ENCODE measurements at regions of chr17 and their contacts with region 1.

Region 1: DNA sequence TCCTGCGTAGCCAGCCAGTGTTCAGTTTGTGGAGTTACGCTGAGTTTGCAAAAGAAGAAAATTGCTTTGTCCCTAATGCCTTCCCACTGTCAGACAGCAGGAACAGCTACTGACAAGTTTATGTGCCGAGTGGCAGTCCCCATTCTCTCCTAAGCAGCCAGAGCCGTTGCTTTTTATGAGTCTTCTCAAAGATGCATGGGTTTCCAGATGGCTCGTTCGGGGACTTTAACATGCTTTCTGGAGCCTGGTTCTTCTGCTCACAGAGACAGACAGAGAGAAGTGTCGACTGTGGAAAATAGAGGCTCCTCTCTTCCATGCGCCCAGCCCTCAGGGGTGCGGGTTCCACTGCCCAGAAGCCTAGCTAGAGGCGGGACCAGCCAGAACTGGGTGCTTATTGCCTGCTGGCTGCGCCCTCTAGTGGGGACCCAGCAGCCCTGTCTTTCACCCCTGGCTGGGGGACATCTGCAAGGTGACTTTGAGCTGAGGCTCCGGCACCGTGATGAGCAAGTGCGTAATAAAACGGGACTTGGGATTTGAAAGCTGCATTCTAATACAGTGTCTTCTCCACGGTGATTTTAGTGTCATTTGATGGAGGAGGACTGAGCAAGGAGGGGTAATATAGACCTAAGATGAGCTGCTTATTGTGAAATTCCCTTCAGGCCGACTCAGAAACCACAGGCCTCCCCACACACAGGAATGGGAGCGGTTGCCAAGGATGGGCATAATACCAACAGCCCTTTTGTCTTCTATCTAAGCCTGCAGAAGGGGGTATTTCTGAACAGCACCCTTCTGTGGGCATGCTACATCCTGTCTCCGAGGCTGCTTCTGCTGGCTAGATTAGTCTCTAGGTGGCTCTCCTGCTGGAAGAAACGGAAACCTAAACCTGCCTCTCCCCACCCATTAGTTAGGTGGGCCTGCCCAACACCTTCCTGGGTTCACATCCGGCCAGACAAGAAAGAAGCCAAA is 73.1 kb downstream of the CCDC182 start:
- DNase-seq: peak; percentile 82 to 89
- ATAC-seq: peak; percentile 92
- H3K4me3 ChIP-seq: no peak overlapping the region
- H3K27ac ChIP-seq: no peak overlapping the region
- H3K4me1 ChIP-seq: no peaks in the 10 kb centered on the region
- H3K27me3 ChIP-seq: no peaks in the 10 kb centered on the region

Region 2: GRCh38 chr17:57130761-57131461 is 541.0 kb before region 1 on chr17:
- intact Hi-C with region 1: loop called (anchors 5 kb)
- DNase-seq: peak; percentile 85 to 91
- ATAC-seq: peak; percentile 89
- H3K4me3 ChIP-seq: no peak overlapping the region
- H3K27ac ChIP-seq: no peak overlapping the region
- H3K4me1 ChIP-seq: no peaks in the 10 kb centered on the region
- H3K27me3 ChIP-seq: no peaks in the 10 kb centered on the region

Region 3: DNA sequence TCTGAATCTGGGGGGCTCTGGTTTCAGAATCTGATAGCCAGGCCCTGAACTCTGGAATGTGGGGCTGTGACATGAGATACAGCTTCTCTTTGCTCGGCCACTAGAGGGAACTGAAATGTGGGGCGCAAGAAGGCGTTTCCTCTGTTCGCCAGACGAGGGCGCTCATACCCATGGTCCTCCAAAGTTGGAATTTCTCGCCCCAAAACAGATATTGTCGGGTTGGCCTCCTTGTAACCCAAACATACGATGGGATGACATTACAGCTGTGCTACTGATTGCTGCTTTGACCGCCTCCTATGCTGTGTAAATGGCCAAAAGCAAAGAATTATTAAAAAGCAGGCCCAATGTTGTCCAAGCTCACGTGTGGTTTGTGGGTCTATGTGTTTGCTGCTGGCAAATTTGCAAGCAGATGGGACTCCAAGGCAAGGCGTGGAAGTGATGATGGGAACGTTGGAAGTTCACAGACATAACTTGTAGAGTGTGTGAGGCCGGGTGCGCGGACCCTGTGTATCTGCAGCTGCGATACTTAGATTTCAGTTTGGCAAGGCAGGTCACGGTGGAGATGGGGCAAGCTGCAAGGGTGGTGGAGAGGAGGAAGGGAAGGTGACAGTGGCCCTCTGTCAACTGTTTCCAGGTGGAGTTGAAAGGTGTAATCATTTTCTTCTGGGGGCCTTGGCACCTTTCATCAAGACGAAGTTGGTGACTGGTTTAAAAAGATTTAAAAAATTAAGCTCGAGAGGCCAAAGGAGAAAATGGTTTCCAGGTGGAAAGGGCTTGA is 428.6 kb before region 1 on chr17:
- intact Hi-C with region 1: loop called (anchors 2 to 5 kb)
- DNase-seq: peak; percentile 65 to 87
- ATAC-seq: peak; percentile 91
- H3K4me3 ChIP-seq: no peak overlapping the region
- H3K27ac ChIP-seq: no peak overlapping the region
- H3K4me1 ChIP-seq: peaks cover 0 to 3% of the 10 kb centered on the region in 2 donors
- H3K27me3 ChIP-seq: no peaks in the 10 kb centered on the region

Region 4: DNA sequence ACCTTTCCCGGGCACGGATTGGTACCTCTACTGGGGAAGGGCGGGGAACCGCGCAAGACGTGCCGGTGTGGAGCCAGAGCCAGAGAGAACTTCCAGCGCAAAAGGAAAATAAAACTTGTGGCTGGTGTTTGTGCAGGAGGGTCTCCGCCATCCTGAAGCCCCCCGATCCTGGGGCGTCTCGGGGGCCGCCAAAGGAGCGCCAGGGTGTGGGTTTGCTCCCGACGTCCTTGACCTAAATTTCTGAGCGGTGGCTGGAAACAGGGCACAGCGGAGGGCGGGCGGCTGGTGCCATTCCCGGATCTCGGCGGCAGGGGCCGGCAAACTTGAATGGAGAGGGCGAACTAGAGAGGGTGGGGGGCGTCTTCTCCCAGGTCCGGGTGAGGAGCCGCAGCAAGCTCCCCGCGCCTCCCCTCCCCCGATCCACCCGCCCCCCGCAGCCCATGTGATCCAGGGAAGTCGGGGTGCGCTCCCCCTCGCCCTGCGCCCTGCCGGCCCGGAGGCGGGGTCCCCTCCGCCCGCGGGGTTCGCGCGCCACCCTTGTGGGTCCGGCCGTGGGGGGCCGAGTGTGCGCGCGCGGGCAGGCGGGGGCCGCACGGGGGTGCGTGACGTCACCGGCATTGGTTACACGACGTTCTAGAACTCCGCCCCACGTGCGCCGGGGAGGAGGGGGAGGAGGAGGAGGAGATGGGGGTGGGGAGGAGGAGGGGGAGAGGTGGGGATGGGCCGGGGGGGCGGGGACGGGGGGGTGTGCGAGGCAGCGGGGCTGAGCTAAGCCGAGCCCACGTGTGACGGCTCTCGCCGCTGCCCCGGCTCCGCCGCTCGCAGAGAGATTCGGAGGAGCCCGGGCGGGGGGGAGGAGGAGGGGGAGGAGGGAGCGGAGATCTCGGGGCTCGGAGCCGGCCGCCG is 415.9 kb before region 1 on chr17 and contains the start of gene MSI2:
- intact Hi-C with region 1: loop called in 1 of 2 experiments (anchors 5 kb)
- DNase-seq: peak; percentile 94 to 97
- ATAC-seq: peak; percentile 94
- H3K4me3 ChIP-seq: peak within 1 kb of the TSS; percentile 97
- H3K27ac ChIP-seq: peak within 1 kb of the TSS; percentile 69 to 92
- H3K4me1 ChIP-seq: peaks cover 2 to 4% of the 10 kb centered on the region in 2 donors
- H3K27me3 ChIP-seq: no peaks in the 10 kb centered on the region
- total RNA-seq, gene MSI2: 47.2 to 48.2 TPM

Region 5: DNA sequence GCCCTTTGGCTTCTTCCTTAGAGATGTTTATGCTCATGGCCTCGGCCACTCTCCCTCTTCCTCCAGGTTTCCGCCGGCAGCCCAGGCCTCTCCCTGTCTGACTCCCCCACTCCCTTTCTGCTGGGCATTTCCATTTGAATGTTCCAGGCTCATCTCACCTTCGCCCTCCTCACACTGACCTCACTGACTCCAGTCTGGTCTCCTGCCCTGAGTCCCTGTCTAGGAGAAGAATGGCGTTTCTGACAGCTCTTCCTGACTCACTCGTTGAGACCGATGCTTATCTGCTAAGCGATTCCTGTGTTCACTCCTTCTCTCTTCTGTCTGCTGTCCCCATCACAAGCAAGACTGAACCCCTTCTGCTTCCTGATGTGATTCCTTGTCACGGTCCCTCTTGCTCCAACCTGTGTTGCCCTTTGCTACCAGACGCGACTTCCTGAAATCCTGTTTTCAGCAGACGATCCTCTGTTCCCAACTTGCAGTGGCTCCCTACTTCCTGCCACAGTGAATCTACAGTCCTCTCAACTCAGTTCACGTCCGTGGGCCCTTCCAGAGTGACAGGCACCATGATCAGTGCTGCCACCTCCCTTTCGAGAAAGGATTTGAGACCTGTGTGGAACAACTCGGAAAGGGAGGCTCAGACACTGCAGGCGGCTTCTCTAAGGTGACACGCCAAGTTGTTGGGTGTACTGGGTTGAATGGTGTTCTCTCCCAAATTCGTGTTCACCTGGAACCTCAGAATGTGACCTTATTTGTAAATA is 239.3 kb before region 1 on chr17:
- intact Hi-C with region 1: loop called in 1 of 2 experiments (anchors 10 kb)
- DNase-seq: no peak
- ATAC-seq: no peak
- H3K4me3 ChIP-seq: no peak overlapping the region
- H3K27ac ChIP-seq: no peak overlapping the region
- H3K4me1 ChIP-seq: no peaks in the 10 kb centered on the region
- H3K27me3 ChIP-seq: no peaks in the 10 kb centered on the region

Region 6: GRCh38 chr17:57552114-57552624 is 119.8 kb before region 1 on chr17:
- intact Hi-C with region 1: loop called in 1 of 2 experiments (anchors 5 kb)
- DNase-seq: peak in 1 of 2 donors; percentile 85
- ATAC-seq: peak; percentile 69
- H3K4me3 ChIP-seq: no peak overlapping the region
- H3K27ac ChIP-seq: no peak overlapping the region
- H3K4me1 ChIP-seq: no peaks in the 10 kb centered on the region
- H3K27me3 ChIP-seq: no peaks in the 10 kb centered on the region

Region 7: DNA sequence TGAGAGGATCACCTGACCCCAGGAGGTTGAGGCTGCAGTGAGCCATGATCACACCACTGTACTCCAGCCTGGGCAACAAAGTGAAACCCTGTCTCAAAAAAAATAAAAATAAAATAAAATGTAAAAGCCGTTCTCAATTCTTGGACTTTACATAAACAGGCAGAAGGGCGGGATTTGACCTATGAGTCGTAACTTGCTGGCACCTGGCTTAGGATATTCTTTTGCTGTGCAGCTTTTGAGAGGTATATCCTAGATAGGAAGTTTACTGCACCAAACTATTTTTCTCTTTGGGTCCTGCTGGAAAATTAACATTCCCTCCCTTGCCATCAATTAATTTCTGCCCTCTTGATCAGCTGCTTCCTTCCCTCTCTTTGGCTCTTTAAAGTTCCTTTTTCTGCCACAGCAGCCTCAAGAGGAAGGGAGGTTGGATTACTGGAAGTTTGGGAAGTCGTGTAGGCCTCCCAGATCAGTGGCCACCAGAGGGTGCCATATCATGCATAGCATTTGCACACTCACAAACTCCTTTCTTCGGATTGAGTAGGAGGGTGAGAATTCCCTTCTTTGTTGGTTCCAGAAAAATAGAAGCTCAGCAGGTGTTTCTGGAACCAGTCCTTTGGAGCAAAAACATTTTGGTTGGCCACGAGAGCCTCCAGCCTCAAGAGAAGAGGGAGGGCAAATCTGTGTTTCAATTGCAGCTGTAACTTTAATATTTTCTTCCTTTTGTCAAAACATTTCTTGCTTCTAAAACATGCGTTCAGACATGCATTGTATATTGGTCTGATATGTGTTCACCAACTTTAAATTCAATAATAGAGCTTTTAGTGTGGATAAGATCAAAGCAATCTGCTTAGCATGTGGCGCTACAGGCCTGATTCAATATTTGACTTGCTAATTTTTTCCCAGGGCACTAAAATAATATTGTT is 74.2 kb before region 1 on chr17:
- intact Hi-C with region 1: loop called (anchors 5 kb)
- DNase-seq: peak in 1 of 2 donors; percentile 83
- ATAC-seq: peak; percentile 85
- H3K4me3 ChIP-seq: no peak overlapping the region
- H3K27ac ChIP-seq: no peak overlapping the region
- H3K4me1 ChIP-seq: peaks cover 0 to 3% of the 10 kb centered on the region in 2 donors
- H3K27me3 ChIP-seq: no peaks in the 10 kb centered on the region

Region 8: DNA sequence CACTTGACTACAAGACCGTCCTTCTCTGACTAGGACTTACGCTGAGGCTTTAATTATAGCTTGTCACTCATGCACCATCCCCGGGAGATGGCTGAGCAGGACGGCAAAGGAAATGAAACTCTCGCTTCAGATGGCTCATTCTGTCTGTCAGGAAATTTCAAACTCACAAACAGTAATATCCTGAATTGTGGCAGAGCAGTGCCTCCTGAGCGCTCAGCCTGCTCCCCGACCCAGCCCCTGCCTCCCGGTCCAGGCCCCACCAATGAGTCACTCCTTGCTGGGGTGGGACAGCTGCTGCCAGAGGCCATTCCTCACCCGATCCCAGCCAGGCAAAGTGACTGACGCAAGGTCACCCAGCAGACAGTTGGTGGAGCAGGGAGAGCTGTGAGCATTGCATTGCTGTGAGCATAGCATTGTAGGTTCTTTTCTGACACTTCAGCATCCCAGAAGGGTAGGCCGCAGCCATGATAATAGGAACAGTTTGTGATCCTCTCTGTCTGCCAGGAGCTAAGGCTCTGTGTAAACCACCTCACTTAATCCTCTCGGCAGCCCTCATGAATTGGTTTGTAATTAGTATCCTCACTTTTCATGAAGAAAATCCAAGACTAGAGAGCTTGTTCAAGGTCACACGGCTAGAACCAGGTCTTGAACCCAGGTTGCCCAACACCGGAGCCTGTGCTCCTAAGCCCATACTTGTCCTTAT is 52.2 kb after region 1 on chr17:
- intact Hi-C with region 1: no loop called
- DNase-seq: no peak
- ATAC-seq: no peak
- H3K4me3 ChIP-seq: no peak overlapping the region
- H3K27ac ChIP-seq: no peak overlapping the region
- H3K4me1 ChIP-seq: no peaks in the 10 kb centered on the region
- H3K27me3 ChIP-seq: no peaks in the 10 kb centered on the region

Measured in aorta (tissue), 5 donors.